Activated CD8-positive, alpha-beta T cell treated with anti-CD3 and anti-CD28 coated beads, Interleukin-2, amount 10 ng/mL, durations not matched to agents 7 days and 5 days (primary cell): ENCODE measurements at regions of chr11 and their contacts with region 1.

Region 1: GRCh38 chr11:12235947-12236743 is 125.8 kb downstream of the MICAL2 start:
- DNase-seq: peak; percentile 81
- ATAC-seq: peak; percentile 85
- H3K4me3 Mint-ChIP-seq: peak overlapping the region; percentile 32
- H3K27ac Mint-ChIP-seq: peak overlapping the region; percentile 89
- H3K4me1 Mint-ChIP-seq: peaks cover 34% of the 10 kb centered on the region
- H3K27me3 Mint-ChIP-seq: no peaks in the 10 kb centered on the region

Region 2: GRCh38 chr11:12087075-12088004 is 148.8 kb before region 1 on chr11:
- CTCF ChIA-PET with region 1: interaction called, 96 read pairs
- POLR2A ChIA-PET with region 1: interaction called, 5 read pairs
- DNase-seq: peak; percentile 79
- ATAC-seq: peak; percentile 94
- H3K4me3 Mint-ChIP-seq: peak overlapping the region; percentile 67
- H3K27ac Mint-ChIP-seq: peak overlapping the region; percentile 90
- H3K4me1 Mint-ChIP-seq: peaks cover 79% of the 10 kb centered on the region
- H3K27me3 Mint-ChIP-seq: no peaks in the 10 kb centered on the region

Region 3: DNA sequence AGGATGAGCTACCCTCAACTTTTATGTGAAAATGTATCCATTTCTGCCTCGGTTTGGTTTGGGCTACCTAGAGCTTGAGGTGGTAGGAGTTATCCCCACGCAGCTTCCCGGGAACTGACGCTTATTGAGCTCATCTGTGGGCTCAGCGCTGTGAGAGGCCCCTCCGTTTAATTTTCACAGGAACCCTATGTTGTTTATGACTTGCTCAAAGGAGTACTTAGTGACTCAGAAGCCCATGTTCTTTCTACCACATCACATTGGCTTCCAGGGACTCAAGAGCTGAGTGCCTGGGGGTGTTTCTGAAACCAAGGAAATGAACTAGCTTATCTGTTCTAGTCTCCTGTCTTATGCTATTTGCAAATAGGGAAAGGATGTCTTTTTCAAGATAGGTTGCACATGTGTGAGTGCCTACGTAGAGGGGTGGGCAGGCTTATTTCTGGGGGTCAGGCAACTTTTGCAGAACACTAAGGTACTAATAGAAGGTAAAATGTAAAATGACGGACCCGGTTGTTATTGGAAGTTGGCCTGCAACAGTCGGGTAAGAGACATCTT is 85.2 kb before region 1 on chr11:
- CTCF ChIA-PET with region 1: interaction called, 22 read pairs
- POLR2A ChIA-PET with region 1: interaction called, 4 read pairs
- DNase-seq: peak; percentile 37
- ATAC-seq: peak; percentile 46
- H3K4me3 Mint-ChIP-seq: no peak overlapping the region
- H3K27ac Mint-ChIP-seq: peak overlapping the region; percentile 78
- H3K4me1 Mint-ChIP-seq: peaks cover 63% of the 10 kb centered on the region
- H3K27me3 Mint-ChIP-seq: no peaks in the 10 kb centered on the region

Region 4: DNA sequence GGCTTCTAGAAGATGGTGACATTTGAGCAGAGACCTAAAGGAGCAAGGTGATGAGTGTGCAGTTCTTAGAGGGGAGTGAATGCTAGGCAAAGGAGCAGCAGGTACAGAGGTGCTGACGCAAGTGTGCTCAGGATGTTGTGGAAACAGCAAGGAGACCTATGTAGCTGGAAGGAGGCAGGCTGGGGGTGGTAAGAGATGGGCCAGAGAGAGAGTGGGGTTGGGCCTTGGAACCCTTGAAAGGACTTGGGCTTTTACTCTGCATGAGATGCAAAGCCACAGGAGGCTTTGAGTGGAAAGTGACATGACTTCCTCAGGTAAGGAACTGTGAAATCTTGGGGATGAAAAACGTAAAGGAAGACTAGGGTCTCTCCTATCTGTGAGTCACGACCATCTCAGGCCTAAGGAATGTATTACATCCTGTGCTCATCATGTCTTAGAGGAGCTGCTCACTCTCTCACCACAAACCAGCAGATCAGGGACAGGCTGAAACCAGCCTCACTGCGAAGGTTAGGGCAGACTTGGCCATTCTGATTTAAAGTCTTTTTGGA is 60.4 kb before region 1 on chr11:
- CTCF ChIA-PET with region 1: interaction called, 15 read pairs
- POLR2A ChIA-PET with region 1: no interaction called
- DNase-seq: no peak
- ATAC-seq: peak; percentile 78
- H3K4me3 Mint-ChIP-seq: no peak overlapping the region
- H3K27ac Mint-ChIP-seq: peak overlapping the region; percentile 86
- H3K4me1 Mint-ChIP-seq: peaks cover 65% of the 10 kb centered on the region
- H3K27me3 Mint-ChIP-seq: no peaks in the 10 kb centered on the region

Region 5: DNA sequence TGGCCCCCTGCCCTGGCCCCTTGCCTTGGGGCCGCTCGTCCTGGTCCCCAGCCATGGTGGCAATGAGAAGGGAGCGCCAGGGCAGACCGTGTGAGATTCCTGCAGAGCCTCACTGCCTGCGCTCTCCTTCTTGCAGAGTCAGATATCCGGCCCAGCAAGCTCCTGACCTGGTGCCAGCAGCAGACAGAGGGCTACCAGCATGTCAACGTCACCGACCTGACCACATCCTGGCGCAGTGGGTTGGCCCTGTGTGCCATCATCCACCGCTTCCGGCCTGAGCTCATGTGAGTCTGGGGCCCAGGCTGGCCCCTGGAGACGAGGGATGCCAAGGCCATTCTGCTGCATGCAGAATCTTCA is 11.6 kb before region 1 on chr11:
- CTCF ChIA-PET with region 1: interaction called, 77 read pairs
- POLR2A ChIA-PET with region 1: interaction called, 21 read pairs
- DNase-seq: peak; percentile 96
- ATAC-seq: peak; percentile 94
- H3K4me3 Mint-ChIP-seq: peak overlapping the region; percentile 60
- H3K27ac Mint-ChIP-seq: peak overlapping the region; percentile 97
- H3K4me1 Mint-ChIP-seq: peaks cover 51% of the 10 kb centered on the region
- H3K27me3 Mint-ChIP-seq: no peaks in the 10 kb centered on the region